Breast epithelium (tissue), 4 donors: ENCODE measurements at regions of chr4 and their contacts with region 1.

Region 1: GRCh38 chr4:187849556-187850225 is 145.9 kb upstream of the ZFP42 start:
- DNase-seq: no peak
- H3K4me3 ChIP-seq: no peak overlapping the region
- H3K27ac ChIP-seq: no peak overlapping the region
- H3K4me1 ChIP-seq: no peaks in the 10 kb centered on the region
- H3K27me3 ChIP-seq: no peaks in the 10 kb centered on the region
- CTCF ChIP-seq: no peak
- POLR2A ChIP-seq: no peak

Region 2: DNA sequence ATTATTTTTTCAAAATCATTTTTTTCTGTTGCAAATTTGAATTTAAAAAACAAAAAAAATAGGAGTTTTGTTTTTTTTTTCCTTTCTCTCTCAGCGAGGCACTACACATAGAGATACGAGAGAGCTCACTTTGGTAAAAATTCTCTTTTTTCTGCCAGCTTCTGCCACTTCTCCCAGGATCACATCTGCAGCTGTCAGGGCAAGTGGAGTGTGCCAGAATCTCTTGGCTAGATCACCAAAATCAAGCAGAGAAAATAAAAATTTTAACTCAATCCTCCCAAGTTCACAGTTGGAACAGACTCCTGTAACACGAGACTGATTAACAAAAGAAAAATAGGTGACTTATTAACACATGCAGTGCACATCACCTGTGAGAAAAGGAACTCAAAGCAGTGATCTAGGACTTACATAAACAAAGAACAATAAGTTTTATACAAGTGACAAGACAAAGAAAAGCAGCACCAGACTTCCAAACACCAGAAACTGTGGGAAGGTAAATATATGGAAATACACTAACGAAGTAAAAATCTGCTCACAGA is 67.3 kb before region 1 on chr4:
- intact Hi-C with region 1: no loop called
- DNase-seq: no peak
- H3K4me3 ChIP-seq: no peak overlapping the region
- H3K27ac ChIP-seq: no peak overlapping the region
- H3K4me1 ChIP-seq: no peaks in the 10 kb centered on the region
- H3K27me3 ChIP-seq: no peaks in the 10 kb centered on the region
- CTCF ChIP-seq: no peak
- POLR2A ChIP-seq: no peak

Region 3: GRCh38 chr4:188596021-188596420 is 746.3 kb after region 1 on chr4:
- intact Hi-C with region 1: loop called (anchors 5 kb)
- DNase-seq: no peak
- H3K4me3 ChIP-seq: no peak overlapping the region
- H3K27ac ChIP-seq: no peak overlapping the region
- H3K4me1 ChIP-seq: no peaks in the 10 kb centered on the region
- H3K27me3 ChIP-seq: no peaks in the 10 kb centered on the region
- CTCF ChIP-seq: no peak
- POLR2A ChIP-seq: no peak

Region 4: DNA sequence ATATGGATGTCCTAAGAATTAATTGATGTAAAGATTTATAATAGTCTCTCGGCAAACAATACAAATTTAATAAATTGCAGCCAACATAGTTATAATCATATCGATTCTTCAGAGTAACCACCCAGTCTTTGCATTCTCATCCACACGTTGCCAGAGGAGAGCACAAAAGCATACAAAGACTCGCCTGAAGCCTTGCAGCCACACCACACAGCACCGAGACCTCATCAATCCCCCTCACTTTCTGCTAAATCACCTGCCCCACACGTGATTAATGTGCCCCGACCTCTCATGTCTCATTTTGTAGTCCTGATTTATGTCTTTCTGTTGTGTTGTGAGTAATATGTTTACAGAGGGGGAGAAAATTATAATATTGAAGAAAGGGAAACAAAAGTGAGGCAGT is 799.9 kb after region 1 on chr4:
- intact Hi-C with region 1: loop called (anchors 5 kb)
- DNase-seq: no peak
- H3K4me3 ChIP-seq: no peak overlapping the region
- H3K27ac ChIP-seq: no peak overlapping the region
- H3K4me1 ChIP-seq: no peaks in the 10 kb centered on the region
- H3K27me3 ChIP-seq: no peaks in the 10 kb centered on the region
- CTCF ChIP-seq: no peak
- POLR2A ChIP-seq: no peak